ENCODE measurements at regions of chr4 and their contacts with region 1.

Region 1: DNA sequence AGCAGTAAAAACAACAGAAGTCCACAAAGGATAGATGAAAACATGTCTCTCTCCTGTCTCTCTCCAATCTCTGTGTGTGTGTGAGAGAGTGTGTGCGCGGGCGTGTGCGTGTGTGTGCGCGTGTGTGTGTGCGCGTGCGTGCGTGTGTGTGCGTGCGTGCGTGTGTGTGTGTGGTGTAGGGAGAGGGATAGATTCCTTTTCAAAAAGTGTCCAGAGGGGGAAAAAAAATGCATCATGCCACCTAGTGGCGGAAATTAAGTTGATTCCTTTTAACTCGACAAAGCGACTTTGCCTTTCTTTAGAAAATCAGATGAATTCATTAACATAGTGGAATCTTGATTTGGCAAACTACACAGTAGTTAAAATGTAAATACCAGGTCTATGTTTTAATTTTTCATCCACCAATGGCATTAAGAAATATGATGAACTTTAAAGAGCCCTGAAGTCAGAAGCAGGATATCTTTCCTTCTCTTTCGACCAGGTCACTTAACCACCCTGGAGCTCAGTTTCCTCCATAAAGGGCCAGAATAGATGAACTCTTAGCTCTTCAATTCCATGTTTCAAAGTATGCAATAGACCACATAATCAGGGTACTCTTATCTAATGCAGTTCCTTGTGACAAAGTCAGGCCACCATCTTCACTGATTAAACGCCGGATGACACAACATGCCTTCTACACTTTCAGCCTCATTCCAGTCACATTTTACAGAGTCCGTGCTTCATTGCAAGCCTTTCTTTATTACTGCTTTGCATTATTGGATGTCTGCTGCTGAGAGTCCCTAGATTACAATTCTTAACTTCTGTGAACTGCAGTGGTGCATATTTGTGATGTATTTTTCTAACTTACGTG is 162.8 kb downstream of the FBXO8 start:
- DNase-seq: peak; percentile 70
- ATAC-seq: peak; percentile 86 to 94

Region 2: GRCh38 chr4:173777921-173778320 is 342.8 kb before region 1 on chr4:
- intact Hi-C with region 1: no loop called
- DNase-seq: no peak
- ATAC-seq: no peak

Region 3: DNA sequence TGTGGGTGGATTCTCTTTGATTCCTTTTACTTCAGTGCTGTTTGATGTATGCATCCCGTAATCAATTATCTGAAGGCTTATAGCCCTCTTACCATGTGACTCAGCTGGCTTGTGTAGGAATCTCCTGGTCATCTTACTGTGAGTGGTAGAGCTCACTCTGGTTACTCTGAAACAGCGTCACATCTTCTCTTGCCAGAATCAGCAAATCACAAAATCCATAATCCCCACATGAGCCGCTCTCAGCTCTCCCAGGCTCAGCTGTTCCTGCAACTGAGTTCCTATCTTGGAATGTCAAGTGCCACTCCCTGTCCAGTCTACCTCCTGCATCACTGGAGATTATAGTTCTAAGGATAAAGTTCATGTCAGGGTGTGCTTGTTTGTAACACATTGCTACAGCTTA is 115.2 kb before region 1 on chr4:
- intact Hi-C with region 1: loop called in 1 of 2 experiments (anchors 5 kb)
- DNase-seq: peak; percentile 33
- ATAC-seq: peak; percentile 41 to 95

Region 4: DNA sequence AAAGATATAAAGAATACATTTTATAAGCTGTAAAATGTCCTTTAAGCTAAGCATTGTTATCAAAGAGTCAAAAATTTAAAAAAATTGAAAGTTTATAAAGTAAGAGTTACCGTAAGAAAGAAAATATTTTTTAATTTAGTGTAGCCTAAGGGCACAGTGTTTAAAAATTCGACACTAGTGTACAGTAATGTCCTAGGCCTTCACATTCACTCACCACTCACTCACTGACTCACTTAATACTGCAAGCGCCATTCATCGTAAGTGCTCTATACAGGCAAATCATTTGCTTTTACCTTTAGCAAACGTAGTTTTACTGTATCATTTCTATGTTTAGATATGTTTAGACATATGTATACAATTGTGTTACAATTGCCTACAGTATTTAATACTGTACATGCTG is 688.2 kb after region 1 on chr4:
- intact Hi-C with region 1: no loop called
- DNase-seq: no peak
- ATAC-seq: no peak

Measured in left cardiac atrium (tissue), 4 donors.